Activated T-helper 1 cell treated with anti-CD3 and anti-CD28 coated beads, Interleukin-12 subunit alpha, Interleukin-12 subunit beta, Interleukin-2, Interleukin-4 antibody, amounts not matched to agents 30 ng/mL and 10 ng/mL and 1 ng/mL, durations not matched to agents 14 hours and 24 hours and 36 hours (primary cell): ENCODE measurements at regions of chr19 and their contacts with region 1.

Region 1: DNA sequence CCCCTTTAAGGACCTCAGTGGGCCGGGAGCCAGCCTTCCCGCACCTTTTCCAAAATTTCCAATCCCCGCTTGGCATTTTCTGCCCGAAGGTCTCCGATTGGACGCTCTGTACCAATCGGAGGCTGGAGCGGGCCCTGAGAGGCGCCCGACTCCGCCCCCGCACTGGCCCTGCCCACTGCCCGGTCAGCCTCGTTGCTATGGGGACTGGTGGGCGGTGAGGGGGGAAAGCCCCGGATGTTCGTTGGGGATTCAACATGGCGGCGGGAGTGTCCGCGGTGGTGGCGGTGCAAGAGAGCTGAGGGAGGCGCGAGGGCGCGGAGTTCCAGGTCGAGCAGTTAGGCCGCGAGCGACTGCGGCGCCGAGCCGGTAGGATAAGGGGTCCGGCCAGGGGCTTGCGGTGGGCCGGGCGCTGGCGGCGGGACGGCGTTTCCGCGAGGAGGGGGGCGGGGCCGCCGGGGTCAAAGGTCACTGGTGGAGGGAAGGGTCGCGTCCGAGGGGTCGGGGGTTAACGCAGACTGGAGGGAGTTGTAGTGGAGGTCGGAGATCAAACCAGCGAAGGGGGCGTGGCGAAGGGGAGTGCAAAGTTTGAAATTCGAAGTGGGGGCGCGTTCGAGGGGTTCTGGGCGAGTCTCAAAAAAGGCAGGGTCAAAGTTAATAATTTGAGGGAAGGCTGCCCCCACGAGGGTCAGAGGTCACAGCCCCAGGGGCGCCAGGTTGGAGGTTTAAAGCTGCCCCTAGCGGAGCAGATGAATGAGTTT is at the start of gene PAK4:
- DNase-seq: peak; percentile 97
- H3K4me3 Mint-ChIP-seq: peak within 1 kb of the TSS; percentile 99
- H3K27ac Mint-ChIP-seq: peak within 1 kb of the TSS; percentile 99
- H3K4me1 Mint-ChIP-seq: peaks cover 45% of the 10 kb centered on the region
- H3K27me3 Mint-ChIP-seq: peaks cover 6% of the 10 kb centered on the region
- total RNA-seq, gene PAK4: 18.5 and 19.9 TPM in 2 replicates

Region 2: GRCh38 chr19:39187559-39187957 is 61.8 kb after region 1 on chr19:
- intact Hi-C with region 1: loop called (anchors 1 kb)
- DNase-seq: no peak
- H3K4me3 Mint-ChIP-seq: no peak overlapping the region
- H3K27ac Mint-ChIP-seq: no peak overlapping the region
- H3K4me1 Mint-ChIP-seq: no peaks in the 10 kb centered on the region
- H3K27me3 Mint-ChIP-seq: peaks cover 2% of the 10 kb centered on the region

Region 3: DNA sequence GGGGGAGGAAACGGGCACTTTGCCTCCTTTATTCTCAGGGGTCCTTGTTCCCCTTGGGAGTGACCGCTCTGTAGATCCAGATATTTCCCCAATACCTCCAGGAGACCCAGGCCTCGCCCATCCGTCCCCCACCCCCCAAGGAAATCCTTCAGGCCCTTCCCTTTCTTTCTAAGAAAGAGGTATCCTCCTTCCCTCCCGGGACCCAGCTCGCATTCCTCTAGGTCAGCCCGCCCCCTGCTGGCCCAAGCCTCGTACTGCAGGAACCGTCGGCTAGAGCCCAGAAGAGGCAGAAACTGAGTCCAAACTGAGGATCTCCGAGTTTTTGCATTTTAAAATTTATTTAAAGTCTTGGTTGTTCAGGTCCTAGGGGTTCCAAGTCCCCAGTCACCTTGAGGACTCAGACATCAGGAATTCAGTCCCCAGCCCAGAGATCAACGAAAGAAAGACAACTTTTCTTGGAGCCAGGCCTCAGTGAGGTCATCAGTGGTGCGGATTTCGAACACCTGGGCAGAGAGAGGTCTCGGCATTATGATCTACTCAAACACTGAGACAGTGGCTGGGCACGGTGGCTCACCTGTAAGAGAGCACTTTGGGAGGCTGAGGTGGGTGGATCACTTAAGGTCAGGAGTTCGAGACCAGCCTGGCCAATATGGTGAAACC is 202.4 kb after region 1 on chr19:
- intact Hi-C with region 1: loop called (anchors 1 kb)
- DNase-seq: peak; percentile 68
- H3K4me3 Mint-ChIP-seq: no peak overlapping the region
- H3K27ac Mint-ChIP-seq: peak overlapping the region; percentile 35
- H3K4me1 Mint-ChIP-seq: peaks cover 31% of the 10 kb centered on the region
- H3K27me3 Mint-ChIP-seq: no peaks in the 10 kb centered on the region

Region 4: GRCh38 chr19:39341719-39342604 is 216.2 kb after region 1 on chr19 and contains the start of gene SAMD4B:
- intact Hi-C with region 1: loop called (anchors 1 kb)
- DNase-seq: peak; percentile 99
- H3K4me3 Mint-ChIP-seq: peak within 1 kb of the TSS; percentile 99
- H3K27ac Mint-ChIP-seq: peak within 1 kb of the TSS; percentile 96
- H3K4me1 Mint-ChIP-seq: peaks cover 73% of the 10 kb centered on the region
- H3K27me3 Mint-ChIP-seq: no peaks in the 10 kb centered on the region
- total RNA-seq, gene SAMD4B: 71.3 and 71.8 TPM in 2 replicates

Region 5: DNA sequence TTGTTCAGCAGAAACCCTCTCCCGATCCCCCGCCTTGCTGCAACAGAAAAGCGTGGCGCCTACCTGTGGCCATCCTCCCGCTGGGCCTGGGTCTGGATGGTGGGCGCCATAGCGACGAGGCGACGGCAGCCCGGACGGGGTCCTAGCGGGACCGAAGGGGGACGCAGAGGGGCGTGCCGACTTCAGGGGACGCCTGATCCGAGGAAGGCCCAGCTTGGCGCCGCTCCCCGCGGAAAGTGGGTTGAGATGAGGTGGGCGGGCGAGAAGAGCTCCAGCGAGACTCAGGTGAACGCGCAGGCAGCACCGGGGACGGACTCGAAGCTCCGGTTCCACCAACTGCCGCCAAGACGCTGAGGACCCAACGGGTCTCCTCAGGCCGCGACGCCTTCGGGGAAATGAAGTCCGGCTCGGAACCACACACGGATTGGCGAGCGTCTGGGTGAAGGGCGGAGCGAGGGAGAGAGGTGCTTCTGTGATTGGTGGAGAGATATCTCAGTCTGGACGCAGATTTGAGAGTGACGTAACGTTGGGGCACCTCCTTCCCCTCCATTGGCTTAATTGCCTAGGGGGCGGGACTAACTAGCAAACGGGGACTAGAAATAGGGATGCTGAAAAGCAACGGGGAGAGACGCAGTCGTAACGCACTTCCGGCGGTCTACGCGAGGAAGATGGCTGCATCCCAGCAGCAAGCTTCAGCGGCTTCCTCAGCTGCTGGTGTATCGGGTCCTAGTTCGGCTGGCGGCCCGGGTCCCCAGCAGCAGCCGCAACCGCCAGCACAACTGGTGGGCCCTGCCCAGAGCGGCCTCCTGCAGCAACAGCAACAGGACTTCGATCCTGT is 265.2 kb after region 1 on chr19 and contains the starts of genes MED29 and PAF1:
- intact Hi-C with region 1: loop called (anchors 5 kb)
- DNase-seq: peak; percentile 95
- H3K4me3 Mint-ChIP-seq: peak within 1 kb of the TSS; percentile 98
- H3K27ac Mint-ChIP-seq: peak within 1 kb of the TSS; percentile 93
- H3K4me1 Mint-ChIP-seq: peaks cover 31% of the 10 kb centered on the region
- H3K27me3 Mint-ChIP-seq: no peaks in the 10 kb centered on the region
- total RNA-seq, gene MED29: 37.5 and 45.8 TPM in 2 replicates
- total RNA-seq, gene PAF1: 54.8 and 57.3 TPM in 2 replicates

Region 6: DNA sequence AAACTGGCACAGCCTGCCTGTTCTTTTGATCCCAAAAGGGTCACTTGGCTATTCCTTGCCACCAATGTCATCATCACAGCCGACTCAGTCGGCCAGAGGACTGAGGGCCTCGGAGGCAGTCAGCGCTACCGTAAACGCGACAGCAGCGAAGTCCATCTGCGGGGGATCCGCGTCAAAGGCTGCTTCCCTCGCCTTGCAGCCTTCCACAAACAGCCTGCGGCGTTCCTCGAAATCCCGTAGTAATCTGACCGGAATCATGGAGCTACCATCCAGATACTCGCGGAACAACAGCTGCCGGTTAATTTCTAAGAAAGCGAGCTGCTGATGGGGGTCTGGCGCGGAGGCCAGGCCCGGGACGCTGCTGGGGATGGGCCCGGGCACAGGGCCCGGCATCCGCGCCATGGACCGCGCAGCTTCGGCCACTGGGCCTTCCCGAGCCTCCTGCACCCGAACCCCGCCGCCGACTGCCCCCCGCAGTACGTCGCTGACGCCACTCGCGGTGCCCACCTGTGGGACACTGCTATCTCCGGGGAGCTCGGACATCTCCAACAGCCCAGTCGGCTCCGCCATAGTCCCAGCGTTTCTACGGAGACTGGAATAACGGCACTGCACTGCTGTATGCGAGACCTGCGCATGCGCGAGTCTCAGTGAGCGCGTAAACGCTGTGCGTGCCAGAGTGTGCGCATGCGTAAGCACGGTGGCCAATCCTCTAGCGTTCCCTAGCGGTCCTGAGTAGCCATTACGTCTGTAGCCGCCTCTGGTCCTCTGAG is 406.7 kb after region 1 on chr19 and contains the start of gene EID2B:
- intact Hi-C with region 1: loop called (anchors 5 kb)
- DNase-seq: peak; percentile 94
- H3K4me3 Mint-ChIP-seq: peak within 1 kb of the TSS; percentile 92
- H3K27ac Mint-ChIP-seq: peak within 1 kb of the TSS; percentile 84
- H3K4me1 Mint-ChIP-seq: peaks cover 14% of the 10 kb centered on the region
- H3K27me3 Mint-ChIP-seq: peaks cover 2% of the 10 kb centered on the region
- total RNA-seq, gene EID2B: 3.2 and 3.7 TPM in 2 replicates

Region 7: DNA sequence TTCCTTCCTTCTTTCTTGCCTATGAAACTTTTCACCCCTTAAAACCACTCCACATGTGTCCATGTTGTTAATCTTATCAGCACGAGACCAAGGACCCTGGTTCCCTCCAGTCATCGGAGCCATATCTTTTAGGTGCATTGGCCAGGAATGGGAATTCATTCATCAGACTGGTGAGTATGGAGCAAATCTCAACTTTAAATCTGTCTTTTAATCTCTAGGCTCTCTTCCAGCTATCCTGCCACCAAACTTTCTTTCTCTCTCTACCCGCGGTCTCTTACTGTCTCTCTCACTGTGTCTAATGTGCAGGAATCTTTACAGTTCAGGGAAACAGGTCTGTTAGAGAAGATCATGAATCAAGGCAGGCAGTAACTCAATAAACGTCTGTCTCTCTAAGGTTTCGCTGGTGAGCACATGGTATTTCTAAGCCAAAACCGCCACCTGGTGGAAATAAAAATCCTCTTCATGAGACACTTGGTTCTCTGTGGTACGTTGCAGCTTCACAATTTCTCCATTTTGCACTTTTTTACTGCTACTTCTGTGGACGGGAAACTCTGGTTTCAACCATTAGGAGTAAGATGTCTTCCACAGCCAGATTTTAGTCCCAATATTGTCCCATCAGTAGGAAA is 546.1 kb after region 1 on chr19:
- intact Hi-C with region 1: loop called (anchors 10 kb)
- DNase-seq: peak; percentile 50
- H3K4me3 Mint-ChIP-seq: no peak overlapping the region
- H3K27ac Mint-ChIP-seq: no peak overlapping the region
- H3K4me1 Mint-ChIP-seq: peaks cover 32% of the 10 kb centered on the region
- H3K27me3 Mint-ChIP-seq: peaks cover 5% of the 10 kb centered on the region